K562 (cell line): ENCODE measurements at regions of chr1 and their contacts with region 1.

Region 1: GRCh38 chr1:167059045-167059808 is 30.9 kb downstream of the GPA33 start:
- DNase-seq: peak; percentile 74 to 85 (median 76)
- ATAC-seq: peak; percentile 75
- H3K4me3 ChIP-seq: no peak overlapping the region
- H3K27ac ChIP-seq: peak overlapping the region; percentile 20; the same call in 1 of the 3 replicates
- H3K4me1 ChIP-seq: peaks cover 0 to 10% of the 10 kb centered on the region in 2 experiments; a peak in 3 of 5 replicates
- H3K27me3 ChIP-seq: peaks cover 9 to 32% of the 10 kb centered on the region in 2 experiments; a peak in 4 of 5 replicates
- CTCF ChIP-seq: peak; percentile 89 to 98 (median 96)
- EP300 ChIP-seq: no peak
- POLR2A ChIP-seq: no peak
- RAD21 ChIP-seq: peak; percentile 87 to 95

Region 2: DNA sequence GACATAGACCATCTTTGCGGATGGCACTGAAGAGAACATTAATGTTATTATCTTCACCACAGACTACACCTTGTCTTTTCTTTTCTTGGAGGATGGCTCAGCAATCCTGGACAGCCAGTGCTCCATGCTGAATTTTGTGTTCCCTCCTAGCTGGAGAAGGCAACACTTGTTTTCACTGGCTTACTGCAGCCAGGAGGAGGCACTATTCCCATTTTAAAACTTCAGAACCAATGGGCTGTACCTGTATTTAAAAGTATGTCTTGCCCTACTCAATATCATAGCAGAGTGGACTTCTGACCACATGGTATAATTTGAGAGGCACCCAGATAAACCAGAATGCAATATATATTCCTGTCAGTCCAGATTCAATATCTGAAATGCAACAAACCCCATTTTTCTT is 273.2 kb before region 1 on chr1:
- CTCF ChIA-PET with region 1: no interaction called
- POLR2A ChIA-PET with region 1: no interaction called
- in situ Hi-C with region 1: no loop called
- intact Hi-C with region 1: loop called (anchors 5 kb)
- DNase-seq: peak in 3 of 4 experiments; percentile 11 to 23 (median 21)
- ATAC-seq: peak; percentile 65
- H3K4me3 ChIP-seq: no peak overlapping the region
- H3K27ac ChIP-seq: no peak overlapping the region
- H3K4me1 ChIP-seq: no peaks in the 10 kb centered on the region
- H3K27me3 ChIP-seq: no peaks in the 10 kb centered on the region
- CTCF ChIP-seq: peak; percentile 24 to 48 (median 44)
- EP300 ChIP-seq: no peak
- POLR2A ChIP-seq: no peak
- RAD21 ChIP-seq: peak; percentile 13 to 61; a peak in 3 of 4 replicates

Region 3: GRCh38 chr1:166884040-166884642 is 175.1 kb before region 1 on chr1:
- CTCF ChIA-PET with region 1: interaction called, 6 read pairs
- POLR2A ChIA-PET with region 1: interaction called, 4 read pairs
- in situ Hi-C with region 1: no loop called
- intact Hi-C with region 1: loop called (anchors 2 kb)
- DNase-seq: peak; percentile 50 to 57 (median 54)
- ATAC-seq: peak; percentile 96
- H3K4me3 ChIP-seq: no peak overlapping the region
- H3K27ac ChIP-seq: no peak overlapping the region
- H3K4me1 ChIP-seq: peaks cover 0 to 8% of the 10 kb centered on the region in 2 experiments; a peak in 2 of 5 replicates
- H3K27me3 ChIP-seq: peaks cover 37 to 44% of the 10 kb centered on the region in 2 experiments
- CTCF ChIP-seq: peak; percentile 70 to 83 (median 73)
- EP300 ChIP-seq: no peak
- POLR2A ChIP-seq: no peak
- RAD21 ChIP-seq: peak; percentile 57 to 68

Region 4: GRCh38 chr1:166910396-166910994 is 148.7 kb before region 1 on chr1:
- CTCF ChIA-PET with region 1: interaction called, 32 read pairs
- POLR2A ChIA-PET with region 1: interaction called, 11 read pairs
- in situ Hi-C with region 1: loop called (anchors 5 kb)
- intact Hi-C with region 1: loop called (anchors 1 kb)
- DNase-seq: peak; percentile 86 to 94 (median 91)
- ATAC-seq: peak; percentile 100
- H3K4me3 ChIP-seq: no peak overlapping the region
- H3K27ac ChIP-seq: no peak overlapping the region
- H3K4me1 ChIP-seq: 0 out of 5 replicates have a peak, but pooled peaks cover 0 to 2% of the 10 kb centered on the region in 2 experiments
- H3K27me3 ChIP-seq: no peaks in the 10 kb centered on the region
- CTCF ChIP-seq: peak; percentile 84 to 98 (median 91)
- EP300 ChIP-seq: 0 out of 2 replicates have a peak, but pooled peaks have one; percentile 62
- POLR2A ChIP-seq: no peak
- RAD21 ChIP-seq: peak; percentile 93 to 96

Region 5: DNA sequence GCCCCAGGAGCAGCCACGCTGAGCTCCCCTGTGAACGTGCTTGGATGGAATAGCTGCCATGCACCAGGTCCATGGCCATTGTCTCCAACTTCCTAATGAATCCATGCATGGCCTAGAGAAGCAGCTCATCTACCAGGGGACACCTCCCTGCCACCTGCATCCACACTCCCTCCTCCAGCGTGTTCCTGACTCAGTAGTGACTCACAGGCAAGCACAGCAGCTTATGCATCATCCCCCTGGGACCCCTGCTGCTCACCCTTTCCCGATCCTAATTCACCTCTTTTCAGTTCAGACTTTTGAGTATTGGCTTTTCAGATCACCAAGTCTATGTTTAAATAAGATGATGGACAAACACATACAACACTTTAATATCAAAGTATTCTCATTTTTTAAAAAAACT is 143.3 kb before region 1 on chr1:
- CTCF ChIA-PET with region 1: interaction called, 32 read pairs
- POLR2A ChIA-PET with region 1: interaction called, 11 read pairs
- in situ Hi-C with region 1: loop called (anchors 5 kb)
- intact Hi-C with region 1: loop called (anchors 1 kb)
- DNase-seq: no peak
- ATAC-seq: no peak
- H3K4me3 ChIP-seq: no peak overlapping the region
- H3K27ac ChIP-seq: no peak overlapping the region
- H3K4me1 ChIP-seq: peaks cover 0 to 7% of the 10 kb centered on the region in 2 experiments; a peak in 1 of 5 replicates
- H3K27me3 ChIP-seq: peaks cover 25 to 39% of the 10 kb centered on the region in 2 experiments
- CTCF ChIP-seq: no peak
- EP300 ChIP-seq: no peak
- POLR2A ChIP-seq: no peak
- RAD21 ChIP-seq: no peak

Region 6: GRCh38 chr1:166975361-166976129 is 83.7 kb before region 1 on chr1 and contains the start of gene ILDR2:
- CTCF ChIA-PET with region 1: no interaction called
- POLR2A ChIA-PET with region 1: no interaction called
- in situ Hi-C with region 1: no loop called
- intact Hi-C with region 1: loop called (anchors 5 kb)
- DNase-seq: peak; percentile 49 to 78 (median 74)
- ATAC-seq: peak; percentile 92
- H3K4me3 ChIP-seq: peak within 1 kb of the TSS; percentile 56
- H3K27ac ChIP-seq: no peak within 1 kb of the TSS
- H3K4me1 ChIP-seq: peaks cover 3 to 13% of the 10 kb centered on the region in 2 experiments; a peak in 3 of 5 replicates
- H3K27me3 ChIP-seq: peaks cover 35 to 36% of the 10 kb centered on the region in 2 experiments
- CTCF ChIP-seq: peak in 2 of 3 experiments; percentile 19 to 40; a peak in 2 of 6 replicates
- EP300 ChIP-seq: no peak
- POLR2A ChIP-seq: no peak
- RAD21 ChIP-seq: peak in 1 of 2 experiments; percentile 47; a peak in 2 of 4 replicates
- polyA plus RNA-seq, gene ILDR2: not detected

Region 7: GRCh38 chr1:167071286-167071685 is 12.1 kb after region 1 on chr1:
- CTCF ChIA-PET with region 1: no interaction called
- POLR2A ChIA-PET with region 1: no interaction called
- in situ Hi-C with region 1: no loop called
- intact Hi-C with region 1: no loop called
- DNase-seq: no peak
- ATAC-seq: no peak
- H3K4me3 ChIP-seq: no peak overlapping the region
- H3K27ac ChIP-seq: no peak overlapping the region
- H3K4me1 ChIP-seq: peaks cover 0 to 4% of the 10 kb centered on the region in 2 experiments; a peak in 2 of 5 replicates
- H3K27me3 ChIP-seq: peaks cover 42 to 48% of the 10 kb centered on the region in 2 experiments
- CTCF ChIP-seq: no peak
- EP300 ChIP-seq: no peak
- POLR2A ChIP-seq: no peak
- RAD21 ChIP-seq: no peak